Panc1 (cell line): ENCODE measurements at regions of chr1 and their contacts with region 1.

Region 1: GRCh38 chr1:13667691-13668090 is 32.3 kb upstream of the PRDM2 start:
- DNase-seq: no peak
- ATAC-seq: no peak
- H3K4me3 ChIP-seq: no peak overlapping the region
- H3K27ac ChIP-seq: no peak overlapping the region
- H3K4me1 ChIP-seq: no peaks in the 10 kb centered on the region
- H3K27me3 ChIP-seq: no peaks in the 10 kb centered on the region
- CTCF ChIP-seq: no peak

Region 2: GRCh38 chr1:13679651-13680050 is 12.0 kb after region 1 on chr1:
- CTCF ChIA-PET with region 1: no interaction called
- POLR2A ChIA-PET with region 1: no interaction called
- in situ Hi-C with region 1: no loop called
- intact Hi-C with region 1: no loop called
- DNase-seq: no peak
- ATAC-seq: no peak
- H3K4me3 ChIP-seq: no peak overlapping the region
- H3K27ac ChIP-seq: no peak overlapping the region
- H3K4me1 ChIP-seq: no peaks in the 10 kb centered on the region
- H3K27me3 ChIP-seq: no peaks in the 10 kb centered on the region
- CTCF ChIP-seq: no peak

Region 3: GRCh38 chr1:13699936-13700520 is 32.3 kb after region 1 on chr1 and contains the start of gene PRDM2:
- CTCF ChIA-PET with region 1: no interaction called
- POLR2A ChIA-PET with region 1: no interaction called
- in situ Hi-C with region 1: no loop called
- intact Hi-C with region 1: no loop called
- DNase-seq: no peak
- ATAC-seq: peak; percentile 91
- H3K4me3 ChIP-seq: peak within 1 kb of the TSS; percentile 70 to 72
- H3K27ac ChIP-seq: peak within 1 kb of the TSS; percentile 93
- H3K4me1 ChIP-seq: peaks cover 14% of the 10 kb centered on the region; the same call in 1 of the 2 replicates
- H3K27me3 ChIP-seq: peaks cover 3% of the 10 kb centered on the region; the same call in 1 of the 2 replicates
- CTCF ChIP-seq: no peak
- total RNA-seq, gene PRDM2: 40.3 TPM

Region 4: DNA sequence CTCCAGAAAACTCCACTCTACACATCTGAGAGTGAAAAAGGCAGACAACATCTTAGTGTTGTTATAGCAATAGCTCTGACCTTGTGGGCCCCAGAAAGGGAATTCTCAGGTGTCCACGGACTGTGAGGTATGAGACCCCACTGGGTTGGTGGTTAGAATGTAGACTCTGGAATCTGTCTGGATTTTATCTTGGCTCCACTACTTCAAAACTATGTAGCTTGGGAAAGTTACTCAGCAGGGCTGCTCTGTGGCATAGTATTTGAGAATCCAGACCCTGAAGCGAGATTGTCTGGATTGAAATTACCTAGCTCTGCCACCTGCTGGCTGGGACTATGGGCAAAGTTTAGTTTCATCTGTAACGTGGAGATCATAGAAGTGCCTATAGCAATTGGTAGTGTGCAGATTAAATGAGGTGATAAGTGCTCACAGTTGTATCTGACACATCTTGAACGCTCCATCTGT is 58.1 kb after region 1 on chr1:
- CTCF ChIA-PET with region 1: no interaction called
- POLR2A ChIA-PET with region 1: no interaction called
- in situ Hi-C with region 1: no loop called
- intact Hi-C with region 1: loop called (anchors 5 kb)
- DNase-seq: no peak
- ATAC-seq: peak; percentile 91
- H3K4me3 ChIP-seq: no peak overlapping the region
- H3K27ac ChIP-seq: no peak overlapping the region
- H3K4me1 ChIP-seq: no peaks in the 10 kb centered on the region
- H3K27me3 ChIP-seq: no peaks in the 10 kb centered on the region
- CTCF ChIP-seq: peak; percentile 71

Region 5: DNA sequence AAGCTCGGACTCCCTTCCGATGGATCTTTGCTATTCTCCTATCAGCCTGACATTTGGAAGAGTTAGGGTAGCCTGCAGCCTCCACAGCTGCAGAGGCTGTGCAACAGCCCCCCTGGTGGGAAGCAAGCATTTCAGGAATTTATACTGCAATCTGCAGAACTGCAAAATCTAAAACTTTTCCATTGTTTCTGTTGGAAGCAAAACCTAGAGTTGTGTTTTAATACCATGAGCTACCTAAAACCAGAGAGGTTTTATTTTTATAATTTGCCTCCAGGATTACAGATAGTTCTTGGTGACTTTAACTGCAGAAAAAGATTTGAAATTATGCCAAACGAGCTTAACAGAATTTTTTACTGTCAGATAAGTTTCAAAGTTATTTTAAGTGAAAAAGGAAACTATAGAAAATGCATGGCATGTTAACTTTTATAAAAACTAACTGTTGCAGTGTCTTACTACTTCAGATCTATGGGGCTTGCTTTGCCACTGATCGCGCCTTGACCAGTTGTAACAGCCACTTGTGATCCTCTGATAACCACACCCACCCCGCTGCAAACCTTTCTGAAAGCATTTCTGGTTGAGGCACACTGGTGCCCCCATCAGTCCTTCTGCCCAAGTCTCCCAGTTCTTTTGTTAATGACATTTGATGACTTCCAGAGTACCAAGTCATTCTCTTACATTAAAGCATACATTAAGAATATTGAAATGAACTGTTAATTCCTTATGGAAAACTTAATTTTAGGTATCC is 97.1 kb after region 1 on chr1:
- CTCF ChIA-PET with region 1: no interaction called
- POLR2A ChIA-PET with region 1: no interaction called
- in situ Hi-C with region 1: no loop called
- intact Hi-C with region 1: no loop called
- DNase-seq: no peak
- ATAC-seq: no peak
- H3K4me3 ChIP-seq: no peak overlapping the region
- H3K27ac ChIP-seq: no peak overlapping the region
- H3K4me1 ChIP-seq: peaks cover 49% of the 10 kb centered on the region
- H3K27me3 ChIP-seq: no peaks in the 10 kb centered on the region
- CTCF ChIP-seq: no peak

Region 6: DNA sequence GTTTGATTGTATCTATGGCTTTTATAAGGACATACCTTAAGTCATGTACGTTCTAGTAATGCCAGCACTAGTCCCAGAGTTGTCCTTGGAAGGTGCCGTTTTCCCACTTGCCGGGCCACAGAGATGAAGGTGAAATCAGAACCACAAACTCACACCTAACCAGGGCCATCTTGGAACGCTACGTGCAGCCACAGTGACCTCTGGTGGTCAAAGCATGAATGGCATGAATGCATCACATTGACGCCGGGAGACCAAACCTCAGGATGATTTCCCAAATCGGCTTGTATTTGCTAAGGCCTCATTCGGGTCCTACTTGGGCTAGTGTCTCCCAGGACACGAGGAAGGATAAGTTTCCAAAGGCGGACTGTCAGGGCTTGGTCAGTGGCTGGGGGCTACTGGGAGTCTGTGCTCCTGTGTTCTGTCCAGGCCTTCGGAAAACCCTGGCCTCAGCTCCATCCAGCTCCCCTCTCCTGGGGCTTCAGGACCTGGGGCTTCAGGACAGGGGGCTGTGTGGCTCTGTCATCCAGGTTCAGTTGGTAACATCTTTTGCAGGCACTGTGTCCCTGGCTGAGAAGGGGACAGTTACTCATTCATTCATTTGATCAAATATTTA is 292.8 kb after region 1 on chr1:
- CTCF ChIA-PET with region 1: interaction called, 3 read pairs
- POLR2A ChIA-PET with region 1: no interaction called
- in situ Hi-C with region 1: no loop called
- intact Hi-C with region 1: loop called (anchors 5 kb)
- DNase-seq: peak; percentile 73
- ATAC-seq: peak; percentile 86
- H3K4me3 ChIP-seq: no peak overlapping the region
- H3K27ac ChIP-seq: no peak overlapping the region
- H3K4me1 ChIP-seq: no peaks in the 10 kb centered on the region
- H3K27me3 ChIP-seq: peaks cover 2% of the 10 kb centered on the region; the same call in 1 of the 2 replicates
- CTCF ChIP-seq: peak; percentile 95

Region 7: GRCh38 chr1:14064649-14065442 is 397.2 kb after region 1 on chr1:
- CTCF ChIA-PET with region 1: no interaction called
- POLR2A ChIA-PET with region 1: no interaction called
- in situ Hi-C with region 1: no loop called
- intact Hi-C with region 1: no loop called
- DNase-seq: no peak
- ATAC-seq: no peak
- H3K4me3 ChIP-seq: no peak overlapping the region
- H3K27ac ChIP-seq: no peak overlapping the region
- H3K4me1 ChIP-seq: no peaks in the 10 kb centered on the region
- H3K27me3 ChIP-seq: no peaks in the 10 kb centered on the region; the same call in 1 of the 2 replicates
- CTCF ChIP-seq: no peak